Lower leg skin (tissue), 4 donors: ENCODE measurements at regions of chr5 and their contacts with region 1.

Region 1: GRCh38 chr5:172932313-172933017 is 26.8 kb upstream of the RPL26L1 start:
- DNase-seq: peak; percentile 51 to 96
- H3K4me3 ChIP-seq: no peak overlapping the region
- CTCF ChIP-seq: peak in 1 of 3 donors; percentile 94
- POLR2A ChIP-seq: no peak

Region 2: DNA sequence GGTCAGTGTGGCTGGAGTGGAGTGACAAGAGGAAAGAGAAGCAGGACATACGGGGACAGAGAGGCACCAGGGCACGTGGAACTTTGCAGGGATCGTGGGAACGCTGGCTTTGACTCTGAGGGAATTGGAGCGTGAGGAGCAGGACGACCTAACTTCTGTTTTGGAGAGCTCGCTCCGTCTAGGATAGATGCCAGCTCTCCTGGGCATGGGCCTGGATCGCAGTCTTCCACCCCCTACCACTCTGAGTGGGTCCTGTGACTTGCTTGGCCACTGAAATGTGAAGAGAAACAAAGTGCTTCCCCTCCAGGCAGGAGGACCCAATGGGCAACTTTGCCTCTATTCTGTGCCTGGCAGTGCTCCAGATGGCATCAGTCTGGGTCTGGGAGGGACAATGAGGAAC is 469.4 kb before region 1 on chr5:
- intact Hi-C with region 1: loop called (anchors 10 kb)
- DNase-seq: no peak
- H3K4me3 ChIP-seq: no peak overlapping the region
- CTCF ChIP-seq: no peak
- POLR2A ChIP-seq: no peak

Region 3: DNA sequence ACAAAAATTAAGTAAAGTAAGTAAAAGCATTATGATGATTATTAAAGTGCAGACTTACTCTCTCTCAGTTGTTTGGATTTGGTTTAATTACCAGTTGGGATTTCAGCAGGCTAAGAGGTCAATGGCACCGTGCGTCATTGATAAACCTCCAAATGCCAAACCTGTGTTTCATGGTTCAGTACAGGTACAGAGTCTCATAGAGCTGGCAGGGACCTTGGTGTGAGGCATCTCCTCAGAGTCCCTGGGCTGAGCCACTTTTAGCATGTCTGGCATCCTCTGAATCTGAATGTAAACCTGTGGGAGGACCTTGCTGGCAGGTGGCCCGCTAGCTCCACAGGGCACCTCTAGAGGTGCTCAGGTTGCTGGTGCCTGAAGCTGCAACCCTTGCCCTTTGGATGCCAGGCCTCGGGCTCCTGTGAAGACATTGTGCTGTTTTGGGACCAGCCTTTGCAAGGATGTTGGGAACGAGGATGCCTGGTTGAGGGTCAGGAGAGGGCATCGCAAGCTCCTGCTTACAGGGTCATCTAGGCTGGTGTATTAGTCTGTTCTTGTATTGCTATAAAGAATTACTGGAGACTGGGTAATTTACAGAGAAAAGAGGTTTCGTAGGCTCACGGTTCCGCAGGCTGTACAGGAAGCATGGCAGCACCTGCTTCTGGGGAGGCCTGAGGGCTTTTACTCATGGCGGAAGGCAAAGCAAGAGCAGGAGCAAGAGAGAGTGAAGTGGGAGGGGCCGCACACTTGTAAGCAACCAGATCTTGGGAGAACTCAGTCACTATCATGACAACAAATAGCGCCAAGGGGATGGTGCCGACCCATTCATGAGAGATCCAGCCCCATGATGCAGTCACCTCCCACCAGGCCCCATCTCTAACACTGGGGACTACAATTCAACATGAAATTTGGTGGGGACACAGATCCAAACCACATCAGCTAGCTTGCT is 410.6 kb after region 1 on chr5:
- intact Hi-C with region 1: no loop called
- DNase-seq: peak in 1 of 2 donors; percentile 52
- H3K4me3 ChIP-seq: no peak overlapping the region
- CTCF ChIP-seq: no peak
- POLR2A ChIP-seq: no peak

Region 4: GRCh38 chr5:174338185-174339010 is 1405.9 kb after region 1 on chr5:
- intact Hi-C with region 1: no loop called
- DNase-seq: peak in 1 of 2 donors; percentile 67
- H3K4me3 ChIP-seq: no peak overlapping the region
- CTCF ChIP-seq: no peak
- POLR2A ChIP-seq: no peak